Left cardiac atrium (tissue), 4 donors: ENCODE measurements at regions of chr9 and their contacts with region 1.

Region 1: GRCh38 chr9:113591001-113591898 is 127.7 kb downstream of the RGS3 start:
- DNase-seq: peak; percentile 85
- ATAC-seq: peak; percentile 8 to 10

Region 2: DNA sequence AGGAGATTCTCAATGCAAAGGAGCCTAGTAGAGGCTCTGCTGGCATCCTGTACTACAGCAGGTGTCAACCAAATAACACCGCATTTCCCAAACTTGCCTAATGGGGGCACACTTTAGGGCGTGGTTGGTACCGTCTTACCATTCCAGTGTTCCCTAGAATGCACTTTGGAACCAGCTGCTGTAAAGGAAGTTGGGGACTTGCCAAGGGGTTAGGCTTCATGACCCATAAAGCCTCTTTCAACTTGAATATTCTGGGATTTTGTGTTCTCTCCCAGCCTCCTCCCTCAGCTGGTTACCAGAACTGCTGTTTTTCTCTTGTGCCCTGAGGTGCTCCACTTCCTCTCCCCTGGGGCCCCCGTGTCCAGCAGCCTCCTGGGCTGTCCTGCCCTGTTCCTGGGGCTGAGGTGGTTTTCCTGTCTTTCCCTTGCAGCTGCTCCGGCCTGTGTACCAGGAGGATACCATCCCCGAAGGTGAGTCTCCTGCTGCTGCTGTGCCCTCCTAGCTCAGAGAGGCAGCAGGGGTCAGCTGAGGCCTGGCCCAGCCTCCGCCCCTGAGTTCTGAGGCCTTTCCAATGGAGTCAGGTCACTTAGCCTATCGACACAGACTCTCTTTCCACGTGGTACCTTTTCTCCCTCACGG is 83.0 kb before region 1 on chr9:
- intact Hi-C with region 1: loop called in 1 of 2 experiments (anchors 5 kb)
- DNase-seq: no peak
- ATAC-seq: no peak

Region 3: DNA sequence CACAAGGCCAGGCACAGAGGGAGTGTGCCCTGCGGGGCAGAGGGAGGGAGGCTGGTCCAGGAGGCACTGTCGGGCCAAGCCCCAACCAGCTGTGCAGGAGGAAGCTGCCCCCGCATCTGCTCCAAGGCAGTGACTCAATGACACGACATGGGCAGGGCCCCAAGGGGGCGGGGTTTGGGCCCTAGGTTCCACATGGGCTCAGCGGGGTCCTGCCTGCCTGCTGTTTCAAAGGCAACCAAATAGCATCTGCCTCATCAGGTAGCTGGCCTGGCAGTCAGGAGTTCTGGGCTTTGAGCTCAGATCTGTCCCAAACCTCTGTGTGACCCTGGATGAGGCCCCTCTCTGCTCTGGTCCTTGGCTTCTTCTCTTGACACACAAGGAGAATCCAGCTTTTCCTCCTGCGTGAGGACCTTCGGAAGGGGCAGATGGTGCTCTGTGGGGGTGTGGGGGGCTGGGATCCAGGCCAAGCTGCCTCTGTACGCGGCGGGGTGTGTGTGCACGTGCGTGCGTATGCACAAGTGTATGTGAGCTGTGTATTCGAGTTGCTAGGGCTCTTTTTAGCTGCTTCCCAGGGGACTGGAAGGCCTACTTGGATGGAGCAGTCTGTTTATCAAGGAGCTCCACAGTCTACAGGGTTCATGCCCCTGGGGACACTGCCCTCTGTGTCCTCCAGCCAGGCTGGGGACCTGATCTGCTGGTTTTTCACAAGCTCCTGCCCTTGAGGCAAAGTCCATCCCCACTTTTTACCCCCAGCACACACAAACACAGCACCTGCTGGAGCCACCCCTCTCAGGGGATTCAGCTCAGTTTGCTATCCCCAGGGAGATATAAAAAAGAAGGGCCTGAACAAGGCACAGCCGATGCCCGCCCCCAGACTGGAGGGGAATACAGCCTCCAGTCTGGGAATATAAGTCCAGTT is 11.1 kb after region 1 on chr9:
- intact Hi-C with region 1: no loop called
- DNase-seq: peak; percentile 89
- ATAC-seq: peak; percentile 62 to 70

Region 4: GRCh38 chr9:113657703-113658544 is 66.7 kb after region 1 on chr9:
- intact Hi-C with region 1: loop called (anchors 1 to 2 kb)
- DNase-seq: peak; percentile 88
- ATAC-seq: peak; percentile 69 to 73

Region 5: DNA sequence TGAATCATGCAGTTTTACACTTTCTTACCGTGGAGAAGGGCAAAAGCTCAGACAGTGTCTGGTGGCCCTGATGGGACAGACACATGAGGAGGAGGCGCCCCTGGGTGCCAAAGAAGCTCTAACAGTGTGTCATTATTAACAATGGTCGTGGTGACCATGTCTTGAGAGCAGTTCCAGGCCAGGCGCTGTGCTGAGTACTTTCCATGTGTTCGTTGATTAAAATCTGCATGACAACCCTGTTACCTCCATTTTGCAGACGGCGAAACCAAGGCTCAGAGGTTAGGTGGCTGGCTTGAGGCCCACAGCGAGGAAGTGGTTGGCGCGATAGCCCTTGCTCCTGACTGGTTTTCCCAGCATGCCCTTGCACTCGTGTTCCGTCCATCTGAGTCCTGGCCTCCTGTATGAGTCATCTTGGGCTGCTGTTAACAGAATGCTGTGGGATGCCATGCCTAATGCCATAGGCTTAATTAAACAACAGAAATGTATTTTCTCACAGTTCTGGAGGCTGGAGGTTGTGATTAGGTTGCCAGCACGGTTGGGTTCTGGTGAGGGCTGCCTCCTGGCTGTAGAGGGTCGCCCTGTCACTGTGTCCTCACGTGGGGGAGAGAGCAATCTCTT is 394.8 kb after region 1 on chr9:
- intact Hi-C with region 1: no loop called
- DNase-seq: no peak
- ATAC-seq: no peak